GM10248 (cell line): ENCODE measurements at regions of chr12 and their contacts with region 1.

Region 1: GRCh38 chr12:4421590-4422031 is 24.0 kb downstream of the FGF6 start:
- DNase-seq: peak; percentile 72
- CTCF ChIP-seq: peak; percentile 42

Region 2: DNA sequence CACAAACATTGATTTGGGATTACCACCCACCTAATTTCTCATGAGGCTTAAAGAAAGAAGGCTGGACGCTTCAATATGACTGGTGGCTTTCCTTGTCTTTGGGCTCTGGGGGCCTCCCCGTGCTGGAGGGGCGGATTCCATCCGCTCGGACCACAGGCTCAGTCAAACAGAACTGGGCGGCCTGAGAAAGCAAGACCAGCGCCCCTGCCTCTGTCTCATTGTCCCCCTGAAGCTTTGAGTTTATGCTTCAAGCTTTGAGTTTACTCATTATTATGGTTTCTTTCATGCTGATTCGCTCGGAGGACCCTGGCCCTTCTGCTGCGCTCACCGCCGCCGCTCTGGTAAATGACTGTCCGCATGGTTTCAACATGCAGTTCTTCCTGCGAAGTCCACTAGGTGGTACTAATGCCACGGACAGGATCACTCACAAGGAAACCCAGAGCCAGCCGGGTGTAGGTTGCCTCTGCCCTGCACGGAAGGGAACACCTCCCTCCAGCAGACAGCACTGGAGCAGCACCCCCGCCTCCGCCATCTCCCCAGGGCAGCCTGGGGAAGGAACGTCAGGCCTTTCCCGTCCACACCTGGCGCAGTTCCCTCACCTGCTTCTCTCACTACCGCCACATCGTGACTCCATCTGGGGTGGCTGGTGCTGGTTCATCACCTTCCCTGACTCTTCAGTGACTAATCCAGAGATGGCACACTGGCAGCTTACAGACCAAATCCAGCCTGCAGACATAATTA is 113.8 kb before region 1 on chr12:
- CTCF ChIA-PET with region 1: no interaction called
- POLR2A ChIA-PET with region 1: no interaction called
- DNase-seq: peak; percentile 50
- CTCF ChIP-seq: peak; percentile 34

Region 3: GRCh38 chr12:4386801-4387200 is 34.8 kb before region 1 on chr12:
- CTCF ChIA-PET with region 1: no interaction called
- POLR2A ChIA-PET with region 1: no interaction called
- DNase-seq: no peak
- CTCF ChIP-seq: no peak

Region 4: DNA sequence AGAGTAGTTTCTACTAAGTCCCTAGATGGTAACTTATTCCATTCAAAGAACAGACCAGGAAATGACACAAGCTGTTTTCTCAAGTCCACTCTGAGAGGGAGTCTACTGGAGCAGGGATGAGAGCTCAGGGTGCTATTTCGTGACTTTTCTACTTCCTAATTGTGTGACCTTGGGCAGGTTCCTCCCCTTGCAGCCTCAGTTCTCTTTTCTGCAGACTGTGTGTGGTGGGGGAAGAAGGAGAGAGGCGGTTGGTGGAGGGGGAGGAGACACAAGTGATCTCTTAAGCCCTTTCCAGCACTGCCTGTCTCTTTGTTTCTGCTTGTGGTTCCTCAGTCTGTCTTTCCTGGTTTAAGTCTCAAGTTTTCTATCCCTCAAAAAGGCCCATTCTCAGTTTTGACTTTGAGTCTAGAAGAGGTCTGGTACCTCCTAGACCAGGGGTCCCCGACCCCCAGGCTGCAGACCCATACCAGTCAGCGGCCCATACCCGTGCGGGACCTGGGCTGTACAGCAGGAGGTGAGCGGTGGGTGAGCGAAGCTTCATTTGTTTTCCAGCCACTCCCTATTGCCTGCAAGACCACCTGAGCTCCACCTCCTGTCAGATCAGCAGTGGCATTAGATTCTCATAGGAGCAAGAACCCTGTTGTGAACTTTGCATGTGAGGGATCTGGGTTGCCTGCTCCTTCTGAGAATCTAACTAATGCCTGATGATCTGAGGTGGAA is 13.3 kb after region 1 on chr12:
- CTCF ChIA-PET with region 1: interaction called, 37 read pairs
- POLR2A ChIA-PET with region 1: no interaction called
- DNase-seq: no peak
- CTCF ChIP-seq: no peak

Region 5: GRCh38 chr12:4526923-4527546 is 105.4 kb after region 1 on chr12:
- CTCF ChIA-PET with region 1: interaction called, 11 read pairs
- POLR2A ChIA-PET with region 1: no interaction called
- DNase-seq: no peak
- CTCF ChIP-seq: peak; percentile 15

Region 6: GRCh38 chr12:4763549-4763948 is 341.9 kb after region 1 on chr12:
- CTCF ChIA-PET with region 1: interaction called, 15 read pairs
- POLR2A ChIA-PET with region 1: no interaction called
- DNase-seq: no peak
- CTCF ChIP-seq: no peak